Colonic mucosa (tissue), 4 donors: ENCODE measurements at regions of chr13 and their contacts with region 1.

Region 1: GRCh38 chr13:110455941-110456340 is 105.6 kb downstream of the RAB20 start:
- DNase-seq: peak; percentile 83
- H3K4me3 ChIP-seq: no peak overlapping the region
- H3K27ac ChIP-seq: no peak overlapping the region
- H3K4me1 ChIP-seq: no peaks in the 10 kb centered on the region
- H3K27me3 ChIP-seq: no peaks in the 10 kb centered on the region
- CTCF ChIP-seq: peak; percentile 75

Region 2: GRCh38 chr13:110138010-110138699 is 317.8 kb before region 1 on chr13:
- intact Hi-C with region 1: no loop called
- DNase-seq: peak; percentile 53
- H3K4me3 ChIP-seq: peak overlapping the region; percentile 57
- H3K27ac ChIP-seq: peak overlapping the region; percentile 8
- H3K4me1 ChIP-seq: no peaks in the 10 kb centered on the region
- H3K27me3 ChIP-seq: no peaks in the 10 kb centered on the region
- CTCF ChIP-seq: no peak

Region 3: GRCh38 chr13:110575322-110576069 is 119.6 kb after region 1 on chr13:
- intact Hi-C with region 1: loop called (anchors 10 kb)
- DNase-seq: no peak
- H3K4me3 ChIP-seq: no peak overlapping the region
- H3K27ac ChIP-seq: no peak overlapping the region
- H3K4me1 ChIP-seq: no peaks in the 10 kb centered on the region
- H3K27me3 ChIP-seq: no peaks in the 10 kb centered on the region
- CTCF ChIP-seq: no peak